HepG2 (cell line): ENCODE measurements at regions of chr1 and their contacts with region 1.

Region 1: DNA sequence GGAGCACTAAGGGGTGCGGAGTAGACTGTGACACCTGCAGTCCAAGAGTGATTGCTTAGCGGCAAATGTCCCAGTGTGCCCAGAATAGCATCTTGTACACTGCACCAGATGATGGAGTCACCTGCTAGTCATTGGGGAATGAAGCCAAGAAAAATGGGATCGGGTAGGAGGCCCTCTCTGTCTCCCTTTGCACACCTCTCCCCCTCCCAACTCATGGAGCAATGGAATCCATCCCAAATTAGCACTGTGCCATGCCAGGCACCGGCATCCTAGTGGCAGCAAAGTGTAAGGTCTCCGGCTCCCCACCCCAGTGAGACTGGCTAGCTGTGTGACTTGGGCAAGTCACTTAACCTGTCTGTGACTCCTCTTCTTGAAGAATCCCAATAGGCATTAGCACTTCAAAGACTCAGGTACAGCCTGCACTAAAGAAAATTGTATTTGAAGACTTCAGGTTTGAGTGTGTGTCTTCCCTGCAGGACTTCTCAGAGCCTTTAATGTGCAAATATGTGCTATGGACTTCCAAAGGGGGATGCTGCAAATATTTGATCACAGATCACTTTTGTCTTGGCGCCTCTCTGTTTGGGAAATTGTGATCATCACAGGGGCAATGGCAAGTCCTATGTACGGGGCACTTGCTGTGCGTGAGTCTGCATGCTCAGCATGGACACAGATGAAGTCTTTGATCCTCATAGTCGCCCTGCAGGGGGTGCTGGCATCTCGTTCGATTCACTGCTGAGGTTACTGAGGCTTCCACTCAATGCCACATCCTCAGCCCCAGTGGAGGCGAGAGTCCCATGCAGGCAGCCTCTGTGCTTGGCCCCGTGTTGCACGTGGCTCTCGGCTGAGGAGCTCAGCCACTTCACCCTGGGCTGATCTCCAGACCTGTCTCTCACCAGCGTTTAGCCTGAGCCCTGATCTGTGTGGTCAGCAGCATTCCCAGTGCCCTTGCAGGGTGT is 272.9 kb upstream of the C1orf174 start:
- DNase-seq: peak; percentile 73
- ATAC-seq: peak; percentile 97
- H3K4me3 ChIP-seq: no peak overlapping the region
- H3K27ac ChIP-seq: no peak overlapping the region
- H3K4me1 ChIP-seq: peaks cover 9% of the 10 kb centered on the region
- H3K27me3 ChIP-seq: peaks cover 1 to 31% of the 10 kb centered on the region in 2 experiments
- CTCF ChIP-seq: peak; percentile 86
- EP300 ChIP-seq: no peak
- POLR2A ChIP-seq: no peak
- RAD21 ChIP-seq: peak; percentile 85

Region 2: DNA sequence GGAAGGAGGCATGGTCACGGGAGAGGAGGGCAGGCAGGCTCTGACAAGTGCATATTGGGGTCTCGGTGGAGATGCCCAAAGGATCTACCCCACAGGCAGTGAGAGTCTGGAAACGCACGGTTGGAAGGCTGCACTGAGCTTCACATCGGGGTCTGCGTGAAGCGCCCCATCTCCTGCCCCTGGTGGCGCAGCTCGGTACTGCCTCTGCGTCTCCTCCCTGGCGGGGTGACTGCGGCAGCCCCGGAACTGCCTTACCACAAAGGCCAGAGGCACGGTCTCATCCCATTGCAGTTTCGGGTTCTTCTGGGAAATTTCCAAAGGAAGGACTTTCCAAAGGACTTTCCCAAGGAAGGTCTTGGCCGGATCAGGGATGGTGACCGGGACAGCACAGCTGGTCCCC is 412.3 kb after region 1 on chr1:
- CTCF ChIA-PET with region 1: interaction called, 3 read pairs
- POLR2A ChIA-PET with region 1: no interaction called
- in situ Hi-C with region 1: loop called (anchors 5 kb)
- intact Hi-C with region 1: loop called (anchors 10 kb)
- DNase-seq: no peak
- ATAC-seq: peak; percentile 86
- H3K4me3 ChIP-seq: no peak overlapping the region
- H3K27ac ChIP-seq: no peak overlapping the region
- H3K4me1 ChIP-seq: no peaks in the 10 kb centered on the region
- H3K27me3 ChIP-seq: peaks cover 0 to 4% of the 10 kb centered on the region in 2 experiments; a peak in 1 of 5 replicates
- CTCF ChIP-seq: peak; percentile 56
- EP300 ChIP-seq: no peak
- POLR2A ChIP-seq: no peak
- RAD21 ChIP-seq: no peak

Region 3: GRCh38 chr1:4594286-4594991 is 421.5 kb after region 1 on chr1:
- CTCF ChIA-PET with region 1: no interaction called
- POLR2A ChIA-PET with region 1: no interaction called
- in situ Hi-C with region 1: loop called (anchors 5 kb)
- intact Hi-C with region 1: loop called (anchors 10 kb)
- DNase-seq: no peak
- ATAC-seq: peak; percentile 80
- H3K4me3 ChIP-seq: no peak overlapping the region
- H3K27ac ChIP-seq: no peak overlapping the region
- H3K4me1 ChIP-seq: no peaks in the 10 kb centered on the region
- H3K27me3 ChIP-seq: peaks cover 5 to 28% of the 10 kb centered on the region in 2 experiments; a peak in 4 of 5 replicates
- CTCF ChIP-seq: peak; percentile 50
- EP300 ChIP-seq: no peak
- POLR2A ChIP-seq: no peak
- RAD21 ChIP-seq: no peak

Region 4: GRCh38 chr1:4825800-4826450 is 653.0 kb after region 1 on chr1:
- CTCF ChIA-PET with region 1: interaction called, 5 read pairs
- POLR2A ChIA-PET with region 1: no interaction called
- in situ Hi-C with region 1: no loop called
- intact Hi-C with region 1: loop called (anchors 10 kb)
- DNase-seq: peak; percentile 25
- ATAC-seq: peak; percentile 77
- H3K4me3 ChIP-seq: no peak overlapping the region
- H3K27ac ChIP-seq: no peak overlapping the region
- H3K4me1 ChIP-seq: no peaks in the 10 kb centered on the region
- H3K27me3 ChIP-seq: 0 out of 5 replicates have a peak, but pooled peaks cover 0 to 5% of the 10 kb centered on the region in 2 experiments
- CTCF ChIP-seq: peak; percentile 73
- EP300 ChIP-seq: no peak
- POLR2A ChIP-seq: no peak
- RAD21 ChIP-seq: no peak